Esophagus squamous epithelium (tissue), 5 donors: ENCODE measurements at regions of chrX and their contacts with region 1.

Region 1: DNA sequence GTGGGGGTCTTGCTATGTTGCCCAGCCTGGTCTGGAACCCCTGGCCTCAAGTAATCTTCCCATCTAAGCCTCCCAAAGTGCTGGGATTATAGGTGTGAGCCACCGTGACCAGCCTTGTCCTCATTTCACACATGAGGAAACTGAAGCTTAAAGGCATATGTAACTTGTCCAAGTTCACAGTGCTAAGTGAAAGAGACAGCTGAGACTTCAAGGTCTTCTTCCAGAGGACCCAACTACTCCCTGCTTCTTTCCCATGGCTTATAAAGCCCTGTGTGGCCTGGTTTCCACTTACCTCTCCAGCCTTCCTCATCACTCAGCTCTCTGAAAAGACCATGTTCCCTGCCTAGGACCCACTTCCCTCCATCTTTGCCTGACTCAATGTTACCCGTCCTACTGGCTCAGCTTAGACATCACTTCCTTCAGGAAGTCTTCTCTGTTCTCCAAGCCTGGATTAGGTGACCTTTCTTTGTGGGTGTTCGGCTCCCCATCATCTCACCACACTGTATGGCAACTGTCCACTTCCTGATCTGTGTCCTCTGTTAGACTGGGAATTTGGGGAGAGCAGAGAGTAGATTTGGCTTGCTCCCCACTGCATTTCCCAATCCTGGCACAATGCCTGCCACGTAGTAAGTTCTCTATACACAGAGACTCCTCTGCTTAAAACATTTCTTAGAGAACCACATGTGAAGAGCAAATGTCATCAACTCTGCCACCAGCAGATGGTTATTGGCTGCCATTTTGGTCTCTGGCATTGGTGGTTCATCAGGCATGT is 30.4 kb upstream of the LAMP2 start:
- DNase-seq: no peak
- H3K4me3 ChIP-seq: no peak overlapping the region
- H3K27ac ChIP-seq: no peak overlapping the region
- H3K4me1 ChIP-seq: no peaks in the 10 kb centered on the region
- H3K27me3 ChIP-seq: no peaks in the 10 kb centered on the region
- CTCF ChIP-seq: no peak
- POLR2A ChIP-seq: no peak

Region 2: GRCh38 chrX:120769576-120770341 is 270.3 kb after region 1 on chrX:
- intact Hi-C with region 1: loop called (anchors 10 kb)
- DNase-seq: no peak
- H3K4me3 ChIP-seq: no peak overlapping the region
- H3K27ac ChIP-seq: no peak overlapping the region
- H3K4me1 ChIP-seq: no peaks in the 10 kb centered on the region
- H3K27me3 ChIP-seq: no peaks in the 10 kb centered on the region
- CTCF ChIP-seq: peak in 3 of 6 experiments; percentile 15 to 37 (median 16)
- POLR2A ChIP-seq: no peak